Head of caudate nucleus (tissue), 42 donors: ENCODE measurements at regions of chr4 and their contacts with region 1.

Region 1: DNA sequence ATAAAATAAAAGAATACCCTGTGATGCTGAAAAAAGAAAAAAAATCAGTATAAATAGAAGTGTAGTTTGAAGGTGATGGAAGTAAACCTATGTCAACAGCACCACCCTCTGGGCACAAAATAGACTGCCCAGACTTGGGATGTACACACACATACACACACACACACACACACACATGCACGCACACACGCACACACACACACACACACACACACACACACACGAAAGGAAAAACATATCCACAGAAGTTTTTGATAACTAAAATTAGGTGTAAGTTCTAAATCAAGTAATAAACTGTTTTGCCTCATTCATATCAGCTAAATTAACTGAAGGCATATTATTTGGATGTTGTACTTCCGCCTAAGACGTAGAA is 40.5 kb downstream of the ANXA5 start:
- DNase-seq: peak; percentile 7 to 73 (median 46)

Region 2: DNA sequence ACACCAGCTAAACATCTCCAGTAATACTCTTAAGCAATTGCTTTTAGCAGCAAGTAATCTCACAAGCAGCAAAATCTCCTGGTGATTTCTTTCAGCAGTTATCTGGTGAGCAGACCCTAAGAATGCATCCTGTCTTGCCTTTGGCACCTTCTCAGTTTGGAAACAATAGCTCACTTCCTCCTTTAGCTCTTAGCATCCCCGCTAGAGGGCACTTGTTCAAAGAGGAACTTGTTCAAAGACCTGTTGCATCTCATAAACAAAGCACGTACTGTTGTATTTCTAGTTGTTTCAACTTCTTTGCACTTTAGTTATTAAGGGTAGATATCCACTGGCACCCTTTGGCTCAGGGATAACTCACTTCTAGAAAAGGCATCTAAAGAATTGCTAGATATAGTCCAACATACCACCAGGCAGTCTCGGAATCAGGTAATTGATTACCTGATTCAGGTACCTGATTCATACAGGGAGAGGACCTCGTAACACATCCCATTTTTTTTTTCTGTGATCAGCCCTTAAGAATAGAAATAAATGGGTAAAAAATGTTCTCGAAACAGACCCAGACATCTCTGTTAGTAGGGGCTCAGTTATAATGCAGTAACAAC is 193.5 kb before region 1 on chr4:
- intact Hi-C with region 1: loop called (anchors 10 kb)
- DNase-seq: peak in 30 of 42 donors; percentile 18 to 78 (median 56)

Region 3: DNA sequence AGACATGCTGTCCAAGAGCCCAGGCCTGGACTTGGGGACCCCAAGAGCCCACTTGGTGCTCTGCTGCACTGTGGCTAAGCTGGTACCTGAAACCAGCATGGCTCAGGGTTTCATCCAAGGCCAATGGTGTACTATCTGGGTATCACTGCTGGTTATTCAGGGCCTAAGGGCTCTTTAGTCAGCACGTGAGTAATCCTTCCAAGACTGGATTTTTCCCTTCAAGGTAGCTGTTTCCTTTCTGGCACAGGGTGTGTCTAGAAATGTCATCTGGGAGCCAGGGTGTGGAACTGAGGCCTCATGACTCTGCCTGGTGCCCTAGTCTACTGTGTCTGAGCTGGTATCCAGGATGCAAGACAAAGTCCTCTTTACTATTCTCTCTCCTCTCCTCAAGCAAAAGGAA is 176.5 kb before region 1 on chr4:
- intact Hi-C with region 1: no loop called
- DNase-seq: no peak